Activated naive CD4-positive, alpha-beta T cell treated with anti-CD3 and anti-CD28 coated beads for 36 hours (primary cell): ENCODE measurements at regions of chr14 and their contacts with region 1.

Region 1: GRCh38 chr14:61662437-61663311 is 32.6 kb upstream of the HIF1A start:
- DNase-seq: peak; percentile 79
- H3K4me3 Mint-ChIP-seq: peak overlapping the region; percentile 63
- H3K27ac Mint-ChIP-seq: peak overlapping the region; percentile 98
- H3K4me1 Mint-ChIP-seq: peaks cover 69% of the 10 kb centered on the region
- H3K27me3 Mint-ChIP-seq: no peaks in the 10 kb centered on the region

Region 2: GRCh38 chr14:61178226-61179060 is 484.2 kb before region 1 on chr14:
- CTCF ChIA-PET with region 1: no interaction called
- intact Hi-C with region 1: loop called (anchors 5 kb)
- DNase-seq: peak; percentile 78
- H3K4me3 Mint-ChIP-seq: peak overlapping the region; percentile 41
- H3K27ac Mint-ChIP-seq: peak overlapping the region; percentile 94
- H3K4me1 Mint-ChIP-seq: peaks cover 57% of the 10 kb centered on the region
- H3K27me3 Mint-ChIP-seq: peaks cover 6% of the 10 kb centered on the region

Region 3: DNA sequence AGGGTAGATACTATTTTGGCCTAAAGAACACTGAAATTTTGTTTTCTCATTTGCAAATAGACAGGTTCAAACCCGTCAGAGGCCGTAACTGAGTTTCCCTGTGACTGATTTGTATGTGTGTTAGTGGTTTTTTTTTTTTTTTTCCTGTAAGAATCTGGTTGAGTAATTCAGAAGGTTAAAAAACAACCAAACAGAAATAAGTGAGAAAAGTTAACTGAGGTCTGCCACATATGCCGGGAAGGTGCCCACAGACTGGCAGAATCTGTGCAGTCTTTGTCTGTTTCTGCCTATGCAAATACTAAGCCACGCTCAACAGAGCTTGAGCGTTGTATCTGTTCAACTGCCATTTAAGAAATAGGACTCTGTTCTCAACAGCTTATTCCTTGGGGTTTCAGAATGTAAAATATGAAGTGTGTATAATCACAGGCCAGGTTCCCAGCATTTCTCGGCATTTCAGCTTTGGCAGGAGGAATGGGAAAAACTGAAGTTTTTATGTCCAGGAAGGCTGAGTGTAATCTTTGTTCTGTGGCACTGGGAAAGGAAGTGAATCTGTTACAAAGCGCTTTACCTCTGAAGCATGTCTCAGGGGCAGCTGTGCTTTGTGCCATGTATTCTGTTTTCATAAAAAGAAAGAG is 159.4 kb before region 1 on chr14:
- CTCF ChIA-PET with region 1: no interaction called
- intact Hi-C with region 1: loop called (anchors 1 kb)
- DNase-seq: peak; percentile 92
- H3K4me3 Mint-ChIP-seq: peak overlapping the region; percentile 66
- H3K27ac Mint-ChIP-seq: peak overlapping the region; percentile 100
- H3K4me1 Mint-ChIP-seq: peaks cover 97% of the 10 kb centered on the region
- H3K27me3 Mint-ChIP-seq: no peaks in the 10 kb centered on the region

Region 4: DNA sequence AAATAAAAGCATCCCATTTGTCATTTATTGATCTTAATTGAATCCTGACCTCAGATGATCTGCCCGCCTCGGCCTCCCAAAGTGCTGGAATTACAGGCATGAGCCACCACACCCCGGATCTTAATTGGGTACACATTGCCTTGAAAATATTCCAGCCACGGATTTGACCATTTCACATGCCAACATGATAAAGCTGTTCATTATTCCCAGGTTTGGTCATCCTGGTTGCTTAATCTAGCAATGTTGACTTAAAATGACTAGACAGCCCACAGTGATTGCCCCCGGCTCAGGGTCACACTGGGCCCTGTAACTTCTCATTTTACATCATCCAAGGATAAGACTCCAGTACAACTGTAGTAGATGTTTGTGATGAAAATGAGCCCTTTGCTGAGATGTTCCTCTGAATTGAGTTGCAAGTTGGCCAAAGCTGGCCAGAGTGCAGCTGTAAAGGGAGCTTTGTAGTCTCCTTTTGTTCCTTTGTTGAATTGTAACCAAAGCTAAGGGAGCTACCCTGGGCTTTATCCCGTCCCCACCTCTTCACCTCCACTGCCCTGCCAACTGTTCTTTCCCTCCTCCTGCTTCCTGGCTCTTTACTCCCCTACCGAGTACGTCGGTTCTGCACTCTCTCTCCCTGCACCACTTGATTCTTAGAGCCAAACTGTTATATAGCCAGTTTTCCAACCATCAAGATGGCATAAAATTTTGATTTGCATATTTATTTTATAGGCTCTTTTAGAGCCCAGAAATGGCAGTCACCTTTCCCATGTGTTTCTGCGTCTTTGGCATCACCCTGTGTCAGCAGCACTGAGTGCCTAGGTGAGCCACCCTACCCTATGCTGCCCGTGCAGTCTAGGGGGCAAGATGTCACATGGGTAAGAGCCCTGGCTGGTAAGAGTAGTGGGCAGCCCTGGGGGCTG is 108.7 kb before region 1 on chr14:
- CTCF ChIA-PET with region 1: no interaction called
- intact Hi-C with region 1: loop called (anchors 1 kb)
- DNase-seq: no peak
- H3K4me3 Mint-ChIP-seq: no peak overlapping the region
- H3K27ac Mint-ChIP-seq: peak overlapping the region; percentile 97
- H3K4me1 Mint-ChIP-seq: peaks cover 66% of the 10 kb centered on the region
- H3K27me3 Mint-ChIP-seq: no peaks in the 10 kb centered on the region

Region 5: GRCh38 chr14:61598980-61599379 is 63.7 kb before region 1 on chr14:
- CTCF ChIA-PET with region 1: interaction called, 3 read pairs
- intact Hi-C with region 1: loop called (anchors 1 kb)
- DNase-seq: peak; percentile 66
- H3K4me3 Mint-ChIP-seq: peak overlapping the region; percentile 14
- H3K27ac Mint-ChIP-seq: peak overlapping the region; percentile 80
- H3K4me1 Mint-ChIP-seq: peaks cover 48% of the 10 kb centered on the region
- H3K27me3 Mint-ChIP-seq: no peaks in the 10 kb centered on the region

Region 6: DNA sequence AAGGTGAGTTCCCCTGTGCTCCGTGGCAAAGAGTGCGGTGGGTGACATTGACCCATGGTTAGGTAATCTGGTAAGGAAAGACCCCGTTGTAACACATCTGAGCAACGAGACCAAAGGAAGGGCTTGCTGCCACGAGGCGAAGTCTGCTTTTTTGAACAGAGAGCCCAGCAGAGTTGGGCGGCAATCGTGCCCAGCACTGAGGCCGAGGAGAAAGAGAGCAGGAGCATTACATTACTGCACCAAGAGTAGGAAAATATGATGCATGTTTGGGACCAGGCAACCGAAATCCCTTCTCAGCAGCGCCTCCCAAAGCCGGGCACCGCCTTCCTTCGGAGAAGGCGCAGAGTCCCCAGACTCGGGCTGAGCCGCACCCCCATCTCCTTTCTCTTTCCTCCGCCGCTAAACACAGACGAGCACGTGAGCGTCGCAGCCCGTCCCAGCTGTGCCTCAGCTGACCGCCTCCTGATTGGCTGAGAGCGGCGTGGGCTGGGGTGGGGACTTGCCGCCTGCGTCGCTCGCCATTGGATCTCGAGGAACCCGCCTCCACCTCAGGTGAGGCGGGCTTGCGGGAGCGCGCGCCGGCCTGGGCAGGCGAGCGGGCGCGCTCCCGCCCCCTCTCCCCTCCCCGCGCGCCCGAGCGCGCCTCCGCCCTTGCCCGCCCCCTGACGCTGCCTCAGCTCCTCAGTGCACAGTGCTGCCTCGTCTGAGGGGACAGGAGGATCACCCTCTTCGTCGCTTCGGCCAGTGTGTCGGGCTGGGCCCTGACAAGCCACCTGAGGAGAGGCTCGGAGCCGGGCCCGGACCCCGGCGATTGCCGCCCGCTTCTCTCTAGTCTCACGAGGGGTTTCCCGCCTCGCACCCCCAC is 32.4 kb after region 1 on chr14 and contains the start of gene HIF1A:
- CTCF ChIA-PET with region 1: interaction called, 3 read pairs
- intact Hi-C with region 1: loop called (anchors 1 kb)
- DNase-seq: peak; percentile 98
- H3K4me3 Mint-ChIP-seq: peak within 1 kb of the TSS; percentile 94
- H3K27ac Mint-ChIP-seq: peak within 1 kb of the TSS; percentile 93
- H3K4me1 Mint-ChIP-seq: peaks cover 44% of the 10 kb centered on the region
- H3K27me3 Mint-ChIP-seq: no peaks in the 10 kb centered on the region
- total RNA-seq, gene HIF1A: 398 to 417 TPM

Region 7: GRCh38 chr14:62002642-62003041 is 340.0 kb after region 1 on chr14:
- CTCF ChIA-PET with region 1: no interaction called
- intact Hi-C with region 1: loop called (anchors 10 kb)
- DNase-seq: peak; percentile 47
- H3K4me3 Mint-ChIP-seq: no peak overlapping the region
- H3K27ac Mint-ChIP-seq: no peak overlapping the region
- H3K4me1 Mint-ChIP-seq: peaks cover 13% of the 10 kb centered on the region
- H3K27me3 Mint-ChIP-seq: peaks cover 17% of the 10 kb centered on the region